ENCODE measurements at regions of chr9 and their contacts with region 1.

Region 1: DNA sequence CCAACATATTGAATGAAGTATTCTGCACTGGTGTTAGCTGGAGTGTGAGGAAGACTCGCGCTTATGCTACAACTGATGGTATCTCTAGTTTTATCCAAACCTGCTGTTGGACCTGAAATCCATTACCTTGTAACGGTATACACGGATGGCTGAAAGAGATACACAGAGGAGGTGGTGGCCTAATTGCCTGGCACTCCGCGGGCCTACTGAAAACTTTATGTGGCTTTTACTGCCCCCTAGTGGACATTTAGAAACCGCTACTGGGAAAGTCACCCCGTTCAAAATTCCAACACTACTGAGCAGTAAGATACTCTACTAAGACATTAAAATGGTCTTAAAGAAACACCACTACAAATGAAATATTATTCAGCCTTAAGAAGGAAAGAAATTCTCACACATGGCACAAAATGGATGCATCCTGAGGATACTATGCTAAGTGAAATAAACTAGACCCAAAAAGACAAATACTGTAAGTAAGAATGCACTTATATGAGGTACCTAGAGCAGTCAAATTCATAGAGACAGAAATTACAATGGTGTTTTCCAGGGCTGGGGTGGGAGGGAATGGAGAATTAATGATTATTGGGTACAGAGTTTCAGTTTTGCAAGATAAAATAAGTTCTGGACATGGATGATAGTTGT is 100.4 kb downstream of the TTLL11 start:
- DNase-seq: peak; percentile 83
- H3K4me3 Mint-ChIP-seq: no peak overlapping the region
- H3K27ac Mint-ChIP-seq: no peak overlapping the region
- H3K4me1 Mint-ChIP-seq: no peaks in the 10 kb centered on the region
- H3K27me3 Mint-ChIP-seq: no peaks in the 10 kb centered on the region

Region 2: DNA sequence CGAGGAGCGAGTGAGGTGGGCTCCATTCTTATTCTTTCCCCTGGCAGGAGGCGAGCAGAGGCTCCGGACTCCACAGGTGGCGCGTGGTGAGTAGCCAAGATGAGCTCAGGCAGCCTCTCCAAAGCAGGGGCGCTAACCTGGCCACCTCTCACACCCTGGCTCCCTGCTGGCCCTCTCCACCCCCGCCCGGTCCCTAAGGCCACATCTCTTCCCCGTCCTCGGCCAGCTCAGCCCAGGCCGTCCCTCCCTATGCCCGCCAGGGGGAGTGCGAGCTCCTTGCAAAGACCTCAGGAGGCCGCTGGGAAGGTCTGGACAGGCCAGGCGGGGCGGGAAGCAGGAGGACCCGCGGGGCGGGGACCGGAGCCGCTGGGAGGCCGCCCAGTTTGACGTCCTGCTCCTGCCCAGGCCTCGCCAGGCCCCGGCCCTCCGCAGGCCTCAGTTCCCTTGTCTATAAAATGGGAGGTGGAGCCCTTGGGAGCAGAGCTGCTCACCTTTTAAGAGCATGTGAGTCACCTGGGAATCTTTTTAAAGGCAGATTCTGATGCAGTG is 446.7 kb before region 1 on chr9:
- intact Hi-C with region 1: loop called (anchors 1 kb)
- DNase-seq: peak; percentile 90
- H3K4me3 Mint-ChIP-seq: no peak overlapping the region
- H3K27ac Mint-ChIP-seq: no peak overlapping the region
- H3K4me1 Mint-ChIP-seq: no peaks in the 10 kb centered on the region
- H3K27me3 Mint-ChIP-seq: peaks cover 3% of the 10 kb centered on the region

Region 3: DNA sequence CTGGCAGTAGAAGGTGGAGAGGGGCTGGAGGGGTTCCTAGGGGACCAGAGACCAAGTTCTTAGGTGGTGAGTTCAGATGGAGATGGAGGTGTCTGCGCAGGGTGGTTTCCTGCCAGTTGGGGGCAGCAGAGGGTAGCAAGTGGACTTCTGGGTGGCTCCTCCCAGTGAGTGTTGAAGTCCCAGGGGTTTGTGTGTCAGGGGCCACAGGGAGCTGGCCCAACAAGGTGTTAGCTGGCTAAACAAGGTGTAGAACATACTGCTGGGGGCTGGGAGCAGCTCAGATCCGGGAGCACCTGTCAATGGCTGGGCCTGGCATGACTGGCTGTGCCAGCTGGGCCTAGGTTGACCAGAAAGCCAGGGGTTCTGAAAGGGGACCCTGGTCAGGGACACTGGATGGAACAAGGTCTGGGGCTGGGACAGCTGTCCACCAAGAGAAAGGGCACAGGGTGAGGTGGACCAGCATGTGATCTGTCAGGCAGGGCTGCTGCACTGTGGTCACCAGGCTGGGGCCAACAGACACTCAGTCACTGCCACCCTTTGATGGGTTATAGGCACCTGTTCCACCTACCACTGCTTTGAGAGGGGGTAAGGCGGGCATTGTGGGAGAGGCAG is 305.7 kb before region 1 on chr9:
- intact Hi-C with region 1: loop called (anchors 1 kb)
- DNase-seq: peak; percentile 91
- H3K4me3 Mint-ChIP-seq: no peak overlapping the region
- H3K27ac Mint-ChIP-seq: no peak overlapping the region
- H3K4me1 Mint-ChIP-seq: no peaks in the 10 kb centered on the region
- H3K27me3 Mint-ChIP-seq: peaks cover 4% of the 10 kb centered on the region

Region 4: DNA sequence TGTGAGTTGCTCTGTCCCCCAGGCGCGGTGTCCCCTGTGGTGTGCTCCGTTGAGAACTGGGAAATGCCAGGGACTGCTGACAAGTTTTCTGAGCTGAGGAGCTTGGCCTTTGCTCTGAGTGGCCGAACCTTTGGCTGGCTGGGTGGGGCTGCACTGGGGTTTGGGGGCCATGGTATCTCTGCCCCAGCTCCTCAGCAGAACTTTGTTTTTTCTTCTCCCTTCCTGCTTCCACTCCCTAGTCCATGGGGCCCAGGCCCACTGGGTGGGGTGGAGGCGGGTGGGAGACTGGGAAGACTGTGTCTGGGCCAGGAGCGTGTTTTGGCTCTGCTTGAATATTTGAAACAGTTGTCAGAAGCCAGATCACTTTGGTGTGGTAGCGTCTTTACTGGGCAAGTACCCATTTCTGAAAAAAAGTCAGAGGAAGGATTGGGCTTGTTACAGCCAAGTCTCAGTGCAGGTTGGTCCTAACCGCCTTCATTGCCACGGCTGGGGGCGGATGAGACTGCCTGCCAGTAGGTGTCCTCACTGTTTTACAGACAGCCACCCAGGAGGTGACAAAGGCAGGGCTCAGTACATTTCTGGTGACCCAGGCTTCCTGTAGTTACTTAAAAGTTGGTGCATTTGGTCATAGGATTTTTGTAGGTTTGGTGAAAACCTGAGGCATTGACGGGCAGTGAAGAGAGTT is 248.5 kb before region 1 on chr9:
- intact Hi-C with region 1: loop called (anchors 2 kb)
- DNase-seq: peak; percentile 86
- H3K4me3 Mint-ChIP-seq: no peak overlapping the region
- H3K27ac Mint-ChIP-seq: no peak overlapping the region
- H3K4me1 Mint-ChIP-seq: peaks cover 13% of the 10 kb centered on the region
- H3K27me3 Mint-ChIP-seq: peaks cover 4% of the 10 kb centered on the region

Region 5: DNA sequence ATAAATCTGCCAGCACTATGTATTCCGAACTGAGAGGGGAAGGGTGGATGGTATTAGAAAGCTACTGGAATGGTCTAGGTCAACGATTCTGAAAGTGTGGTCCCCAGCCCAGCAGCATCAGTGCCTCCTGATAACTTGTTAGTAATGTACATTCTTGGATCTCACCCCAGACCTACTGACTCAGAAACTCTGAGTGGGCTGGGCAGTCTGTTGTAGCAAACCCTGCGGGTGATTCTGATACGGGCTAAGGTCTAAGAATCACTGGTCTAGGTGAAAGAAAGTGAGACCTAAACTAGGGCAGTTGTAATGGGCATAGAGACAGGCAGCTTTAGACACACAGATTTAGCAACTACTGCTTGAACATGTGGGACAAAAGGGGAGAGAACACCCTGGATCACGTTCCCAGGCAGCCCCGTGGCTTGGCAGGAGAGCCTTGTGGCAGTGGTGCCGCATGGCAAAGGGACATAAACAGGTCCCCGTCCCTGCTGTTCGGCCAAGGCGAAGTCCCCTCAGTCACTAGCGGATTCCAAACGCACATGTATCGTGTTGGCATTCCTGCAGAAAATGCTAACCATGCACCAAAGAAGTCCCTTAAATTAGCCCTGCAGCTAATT is 115.9 kb before region 1 on chr9:
- intact Hi-C with region 1: no loop called
- DNase-seq: no peak
- H3K4me3 Mint-ChIP-seq: no peak overlapping the region
- H3K27ac Mint-ChIP-seq: no peak overlapping the region
- H3K4me1 Mint-ChIP-seq: no peaks in the 10 kb centered on the region
- H3K27me3 Mint-ChIP-seq: peaks cover 1% of the 10 kb centered on the region

Region 6: GRCh38 chr9:122051351-122052321 is 58.9 kb after region 1 on chr9:
- intact Hi-C with region 1: loop called (anchors 10 kb)
- DNase-seq: no peak
- H3K4me3 Mint-ChIP-seq: peak overlapping the region; percentile 12
- H3K27ac Mint-ChIP-seq: peak overlapping the region; percentile 71
- H3K4me1 Mint-ChIP-seq: peaks cover 7% of the 10 kb centered on the region
- H3K27me3 Mint-ChIP-seq: peaks cover 3% of the 10 kb centered on the region

Region 7: GRCh38 chr9:123749580-123750202 is 1757.0 kb after region 1 on chr9:
- intact Hi-C with region 1: no loop called
- DNase-seq: no peak
- H3K4me3 Mint-ChIP-seq: no peak overlapping the region
- H3K27ac Mint-ChIP-seq: no peak overlapping the region
- H3K4me1 Mint-ChIP-seq: peaks cover 17% of the 10 kb centered on the region
- H3K27me3 Mint-ChIP-seq: no peaks in the 10 kb centered on the region